Left lung (tissue), 14 donors: ENCODE measurements at regions of chr11 and their contacts with region 1.

Region 1: GRCh38 chr11:130002846-130003716 is 446 bp upstream of the PRDM10 start:
- DNase-seq: peak in 3 of 4 donors; percentile 95 to 97 (median 95)
- ATAC-seq: peak; percentile 89
- H3K4me3 ChIP-seq: peak overlapping the region; percentile 59 to 78
- H3K27ac ChIP-seq: peak overlapping the region; percentile 100
- H3K4me1 ChIP-seq: peaks cover 4 to 36% of the 10 kb centered on the region in 2 donors
- H3K27me3 ChIP-seq: no peaks in the 10 kb centered on the region
- CTCF ChIP-seq: no peak

Region 2: GRCh38 chr11:130069684-130070108 is 66.6 kb after region 1 on chr11 and contains the start of gene APLP2:
- intact Hi-C with region 1: loop called in 1 of 2 experiments (anchors 10 kb)
- DNase-seq: peak; percentile 98 to 100 (median 98)
- ATAC-seq: peak; percentile 87
- H3K4me3 ChIP-seq: peak within 1 kb of the TSS; percentile 67 to 79
- H3K27ac ChIP-seq: peak within 1 kb of the TSS; percentile 93 to 96
- H3K4me1 ChIP-seq: peaks cover 7 to 38% of the 10 kb centered on the region in 2 donors
- H3K27me3 ChIP-seq: no peaks in the 10 kb centered on the region
- CTCF ChIP-seq: no peak
- polyA plus RNA-seq, gene APLP2: 405 to 520 (median 486) TPM

Region 3: DNA sequence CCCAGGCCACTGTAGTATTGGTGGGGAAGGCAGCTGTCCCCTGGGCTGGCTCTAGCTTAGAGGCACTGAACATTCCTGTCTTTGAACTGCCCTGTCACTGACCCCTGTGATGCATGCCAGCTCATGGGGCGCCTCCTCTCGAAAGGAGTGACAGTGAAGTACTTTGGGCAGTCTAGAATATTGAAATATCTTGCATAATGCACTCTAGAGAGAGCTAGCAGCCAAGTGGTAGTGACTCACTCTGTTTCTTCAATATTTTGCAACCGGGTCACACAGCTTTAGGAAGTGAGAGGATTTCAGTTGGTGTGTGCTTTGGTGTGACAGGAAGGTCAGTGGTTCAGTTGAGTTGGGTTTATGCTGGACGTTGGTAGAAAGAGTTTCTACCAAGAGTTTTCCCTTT is 121.0 kb after region 1 on chr11:
- intact Hi-C with region 1: loop called in 1 of 2 experiments (anchors 5 kb)
- DNase-seq: peak in 3 of 4 donors; percentile 59 to 93 (median 90)
- ATAC-seq: peak; percentile 94
- H3K4me3 ChIP-seq: no peak overlapping the region
- H3K27ac ChIP-seq: peak overlapping the region; percentile 62 to 85
- H3K4me1 ChIP-seq: peaks cover 25 to 77% of the 10 kb centered on the region in 2 donors
- H3K27me3 ChIP-seq: no peaks in the 10 kb centered on the region
- CTCF ChIP-seq: no peak